ENCODE measurements at regions of chr7 and their contacts with region 1.

Region 1: DNA sequence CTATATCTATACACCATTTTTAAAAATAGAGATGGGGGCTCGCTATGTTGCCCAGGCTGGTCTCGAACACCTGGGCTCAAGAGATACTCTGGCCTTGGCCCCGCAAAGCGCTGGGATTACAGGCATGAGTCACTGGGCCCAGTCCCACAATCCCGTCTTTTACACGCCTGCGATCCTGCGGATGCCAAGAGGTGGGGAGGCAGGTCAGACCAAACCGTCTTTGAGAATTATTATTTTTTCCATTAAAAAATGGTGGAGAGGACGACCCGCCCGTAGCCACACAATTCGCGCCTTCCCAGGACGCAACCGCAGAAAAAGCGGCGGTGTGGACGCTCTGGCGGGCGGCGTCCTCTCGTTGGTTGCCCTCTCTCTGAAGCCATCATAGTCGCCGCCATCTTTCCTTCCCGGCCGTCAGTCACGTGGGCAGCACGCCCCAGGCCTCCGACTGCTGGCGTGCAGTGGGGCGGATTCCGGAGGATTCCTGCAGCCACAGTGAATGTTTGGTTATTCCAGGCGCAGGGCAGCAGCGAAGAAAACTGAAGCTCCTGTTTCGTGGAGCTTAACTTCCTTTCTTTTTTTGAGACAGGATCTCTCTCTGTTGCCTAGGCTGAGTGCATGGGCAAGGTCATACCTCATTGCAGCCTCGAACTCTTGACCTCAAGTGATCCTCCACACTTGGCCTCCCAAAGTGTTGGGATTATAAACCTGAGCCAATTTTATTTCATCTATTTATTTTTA is 9.9 kb upstream of the EPHB4 start:
- DNase-seq: peak; percentile 84
- ATAC-seq: peak; percentile 98
- H3K4me3 ChIP-seq: peak overlapping the region; percentile 30 to 75 (median 61)
- H3K4me3 Mint-ChIP-seq: peak overlapping the region; percentile 88
- H3K27ac ChIP-seq: peak overlapping the region; percentile 25 to 41
- H3K27ac Mint-ChIP-seq: peak overlapping the region; percentile 86
- H3K4me1 ChIP-seq: peaks cover 3 to 17% of the 10 kb centered on the region in 2 donors
- H3K4me1 Mint-ChIP-seq: peaks cover 14% of the 10 kb centered on the region
- H3K27me3 ChIP-seq: no peaks in the 10 kb centered on the region
- H3K27me3 Mint-ChIP-seq: no peaks in the 10 kb centered on the region
- CTCF ChIP-seq: no peak

Region 2: GRCh38 chr7:100803398-100804233 is 33.7 kb before region 1 on chr7:
- CTCF ChIA-PET with region 1: interaction called, 5 read pairs
- POLR2A ChIA-PET with region 1: no interaction called
- intact Hi-C with region 1: loop called (anchors 1 kb)
- DNase-seq: peak; percentile 90
- ATAC-seq: peak; percentile 98
- H3K4me3 ChIP-seq: peak overlapping the region in 4 of 5 experiments; percentile 54 to 65 (median 56)
- H3K4me3 Mint-ChIP-seq: peak overlapping the region; percentile 86
- H3K27ac ChIP-seq: peak overlapping the region; percentile 84 to 94
- H3K27ac Mint-ChIP-seq: peak overlapping the region; percentile 86
- H3K4me1 ChIP-seq: peaks cover 28 to 35% of the 10 kb centered on the region in 2 donors
- H3K4me1 Mint-ChIP-seq: peaks cover 38% of the 10 kb centered on the region
- H3K27me3 ChIP-seq: no peaks in the 10 kb centered on the region
- H3K27me3 Mint-ChIP-seq: no peaks in the 10 kb centered on the region
- CTCF ChIP-seq: no peak

Region 3: GRCh38 chr7:100874577-100875355 is 37.5 kb after region 1 on chr7 and contains the start of gene SRRT:
- CTCF ChIA-PET with region 1: no interaction called
- POLR2A ChIA-PET with region 1: no interaction called
- intact Hi-C with region 1: loop called (anchors 2 kb)
- DNase-seq: peak; percentile 99
- ATAC-seq: peak; percentile 96
- H3K4me3 ChIP-seq: peak within 1 kb of the TSS; percentile 73 to 99 (median 89)
- H3K4me3 Mint-ChIP-seq: peak within 1 kb of the TSS; percentile 97
- H3K27ac ChIP-seq: peak within 1 kb of the TSS; percentile 91 to 96
- H3K27ac Mint-ChIP-seq: peak within 1 kb of the TSS; percentile 95
- H3K4me1 ChIP-seq: peaks cover 22 to 32% of the 10 kb centered on the region in 2 donors
- H3K4me1 Mint-ChIP-seq: peaks cover 37% of the 10 kb centered on the region
- H3K27me3 ChIP-seq: no peaks in the 10 kb centered on the region
- H3K27me3 Mint-ChIP-seq: no peaks in the 10 kb centered on the region
- CTCF ChIP-seq: no peak
- total RNA-seq, gene SRRT: 209 and 224 TPM in 2 replicates

Measured in B cell (primary cell).